SK-N-SH (cell line): ENCODE measurements at regions of chr1 and their contacts with region 1.

Region 1: GRCh38 chr1:6052543-6053205 is 7.0 kb downstream of the KCNAB2 start:
- DNase-seq: peak; percentile 86
- H3K4me3 ChIP-seq: peak overlapping the region in 1 of 2 experiments; percentile 36; a peak in 1 of 4 replicates
- H3K27ac ChIP-seq: no peak overlapping the region
- H3K4me1 ChIP-seq: peaks cover 0 to 38% of the 10 kb centered on the region in 2 experiments; a peak in 1 of 4 replicates
- H3K27me3 ChIP-seq: no peaks in the 10 kb centered on the region
- CTCF ChIP-seq: peak; percentile 62
- EP300 ChIP-seq: 0 out of 4 replicates have a peak, but pooled peaks of 1 of the 2 experiments have one; percentile 7
- RAD21 ChIP-seq: peak; percentile 94

Region 2: GRCh38 chr1:6019166-6019845 is 33.4 kb before region 1 on chr1:
- CTCF ChIA-PET with region 1: no interaction called
- POLR2A ChIA-PET with region 1: no interaction called
- DNase-seq: no peak
- H3K4me3 ChIP-seq: no peak overlapping the region
- H3K27ac ChIP-seq: no peak overlapping the region
- H3K4me1 ChIP-seq: no peaks in the 10 kb centered on the region
- H3K27me3 ChIP-seq: no peaks in the 10 kb centered on the region
- CTCF ChIP-seq: no peak
- EP300 ChIP-seq: no peak
- RAD21 ChIP-seq: no peak

Region 3: DNA sequence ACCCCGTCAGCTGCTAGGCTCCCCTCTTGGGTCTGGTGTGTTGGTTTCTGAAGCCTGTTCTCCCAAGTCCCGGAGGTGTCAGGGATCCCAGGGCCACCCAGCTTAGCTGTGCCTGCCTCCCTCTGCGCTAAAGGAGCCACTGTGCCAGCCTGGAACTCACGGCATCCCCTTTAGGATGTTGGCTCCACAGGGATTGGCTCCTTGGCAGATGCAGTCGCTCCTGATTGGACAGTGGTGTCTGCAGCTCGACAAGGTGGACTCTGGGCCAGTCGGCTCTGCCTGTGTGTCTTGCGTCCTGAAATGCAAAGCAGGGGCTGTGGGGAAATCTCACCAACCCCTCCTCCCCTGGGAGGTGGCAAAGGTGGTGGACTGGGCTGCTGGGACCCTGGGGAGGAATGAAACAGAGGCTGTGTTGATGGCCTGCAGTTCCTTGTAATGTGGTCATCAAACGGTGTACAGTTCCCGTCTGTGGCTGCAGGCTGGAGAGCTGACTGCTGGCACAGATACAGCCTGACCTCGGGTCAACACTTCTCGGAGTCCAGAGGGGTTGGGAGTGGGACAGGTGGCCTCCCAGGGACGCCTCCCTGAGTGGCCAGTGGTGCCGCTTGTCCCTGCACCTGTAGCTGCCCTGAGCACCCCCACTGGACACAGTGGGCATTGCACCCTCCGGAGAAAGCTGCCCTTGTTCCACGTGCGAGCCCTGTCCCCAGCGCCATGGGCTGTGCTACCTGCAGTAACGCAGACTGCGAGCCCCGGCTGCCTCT is 18.5 kb before region 1 on chr1:
- CTCF ChIA-PET with region 1: interaction called, 23 read pairs
- POLR2A ChIA-PET with region 1: no interaction called
- DNase-seq: peak; percentile 91
- H3K4me3 ChIP-seq: peak overlapping the region; percentile 32 to 44
- H3K27ac ChIP-seq: peak overlapping the region in 1 of 2 experiments; percentile 39; a peak in 1 of 4 replicates
- H3K4me1 ChIP-seq: peaks cover 5 to 19% of the 10 kb centered on the region in 2 experiments; a peak in 1 of 4 replicates
- H3K27me3 ChIP-seq: no peaks in the 10 kb centered on the region
- CTCF ChIP-seq: peak; percentile 63
- EP300 ChIP-seq: no peak
- RAD21 ChIP-seq: peak; percentile 50

Region 4: GRCh38 chr1:6075748-6076147 is 23.1 kb after region 1 on chr1:
- CTCF ChIA-PET with region 1: interaction called, 47 read pairs
- POLR2A ChIA-PET with region 1: interaction called, 3 read pairs
- DNase-seq: no peak
- H3K4me3 ChIP-seq: no peak overlapping the region
- H3K27ac ChIP-seq: no peak overlapping the region
- H3K4me1 ChIP-seq: peaks cover 0 to 27% of the 10 kb centered on the region in 2 experiments; a peak in 1 of 4 replicates
- H3K27me3 ChIP-seq: no peaks in the 10 kb centered on the region
- CTCF ChIP-seq: no peak
- EP300 ChIP-seq: no peak
- RAD21 ChIP-seq: no peak

Region 5: GRCh38 chr1:6099787-6100765 is 47.4 kb after region 1 on chr1:
- CTCF ChIA-PET with region 1: interaction called, 14 read pairs
- POLR2A ChIA-PET with region 1: no interaction called
- DNase-seq: peak; percentile 78
- H3K4me3 ChIP-seq: no peak overlapping the region
- H3K27ac ChIP-seq: no peak overlapping the region
- H3K4me1 ChIP-seq: peaks cover 0 to 5% of the 10 kb centered on the region in 2 experiments; a peak in 1 of 4 replicates
- H3K27me3 ChIP-seq: no peaks in the 10 kb centered on the region
- CTCF ChIP-seq: no peak
- EP300 ChIP-seq: no peak
- RAD21 ChIP-seq: peak; percentile 59

Region 6: GRCh38 chr1:6171548-6172119 is 119.0 kb after region 1 on chr1:
- CTCF ChIA-PET with region 1: interaction called, 20 read pairs
- POLR2A ChIA-PET with region 1: no interaction called
- DNase-seq: peak; percentile 87
- H3K4me3 ChIP-seq: no peak overlapping the region
- H3K27ac ChIP-seq: no peak overlapping the region; a peak in 1 of 4 replicates
- H3K4me1 ChIP-seq: peaks cover 0 to 16% of the 10 kb centered on the region in 2 experiments; a peak in 1 of 4 replicates
- H3K27me3 ChIP-seq: no peaks in the 10 kb centered on the region
- CTCF ChIP-seq: peak; percentile 36
- EP300 ChIP-seq: no peak
- RAD21 ChIP-seq: peak; percentile 64